ENCODE measurements at regions of chr16 and their contacts with region 1.

Region 1: DNA sequence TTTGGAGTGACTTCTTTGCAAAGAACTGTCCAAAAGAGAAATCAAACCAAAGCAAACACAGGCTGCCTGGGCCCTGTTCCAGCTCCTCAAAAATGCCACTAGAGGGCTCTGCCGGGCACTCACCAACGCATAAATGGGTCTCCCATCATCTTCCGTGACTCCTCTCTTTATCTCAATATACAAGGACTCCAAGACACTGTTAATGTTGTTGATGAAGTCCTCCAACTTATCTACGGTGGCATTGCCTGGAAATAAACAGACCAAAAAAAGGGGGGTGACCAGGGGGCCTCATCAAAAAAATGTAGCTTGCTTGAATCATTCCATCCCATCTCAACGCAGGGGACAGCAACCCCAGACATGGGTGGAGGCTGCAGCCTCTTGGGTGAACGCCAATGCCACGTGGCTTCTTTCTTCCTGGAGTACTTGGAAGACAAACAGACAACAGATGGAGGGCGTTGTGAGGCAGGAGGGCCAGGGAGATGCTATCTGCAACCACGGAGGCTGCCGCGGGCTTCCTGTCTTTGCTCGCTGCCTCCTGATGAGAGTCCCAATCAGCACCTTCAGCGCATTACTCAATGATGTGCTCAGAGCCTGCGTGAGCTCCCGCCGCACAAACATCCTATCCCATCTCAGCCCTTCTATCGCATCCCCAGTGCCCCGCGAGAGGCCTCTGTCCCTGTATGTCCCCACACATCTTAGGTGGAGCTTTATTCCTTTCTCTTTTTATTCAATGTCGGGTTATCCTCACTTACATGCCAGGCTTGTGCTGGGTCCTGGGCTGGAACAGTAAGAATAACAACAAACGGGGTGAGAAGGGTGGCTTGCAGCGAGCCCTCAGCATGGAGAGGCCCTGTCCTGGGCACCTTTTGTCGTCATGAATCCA is 32.0 kb downstream of the KDM8 start:
- DNase-seq: peak; percentile 38
- ATAC-seq: peak; percentile 49
- H3K4me3 ChIP-seq: no peak overlapping the region
- H3K27ac ChIP-seq: no peak overlapping the region
- H3K4me1 ChIP-seq: peaks cover 56% of the 10 kb centered on the region
- H3K27me3 ChIP-seq: no peaks in the 10 kb centered on the region
- CTCF ChIP-seq: peak; percentile 88 to 95 (median 89); a peak in 5 of 6 replicates
- EP300 ChIP-seq: no peak
- POLR2A ChIP-seq: no peak
- RAD21 ChIP-seq: peak; percentile 90

Region 2: DNA sequence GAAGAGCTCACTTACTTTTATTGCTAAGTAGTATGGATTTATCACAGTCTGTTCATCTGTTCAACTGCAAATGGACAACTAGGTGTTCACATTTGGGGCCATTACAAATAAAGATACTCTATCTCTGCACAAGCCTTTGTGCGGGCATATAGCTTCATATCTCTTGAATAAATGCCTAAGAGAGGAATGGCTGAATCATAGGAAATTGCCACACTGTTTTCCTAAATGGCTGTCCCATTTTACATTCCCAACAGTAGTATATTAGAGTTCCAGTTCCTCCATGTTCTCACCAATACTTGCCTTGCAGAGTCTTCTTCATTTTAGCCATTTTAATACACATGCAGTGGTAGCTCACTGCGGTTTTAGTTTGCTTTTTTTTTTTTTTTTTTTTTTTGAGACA is 12.7 kb after region 1 on chr16:
- CTCF ChIA-PET with region 1: interaction called, 38 read pairs
- POLR2A ChIA-PET with region 1: interaction called, 79 read pairs
- RAD21 ChIA-PET with region 1: interaction called, 22 read pairs
- SMC1A ChIA-PET with region 1: interaction called, 165 read pairs
- in situ Hi-C with region 1: no loop called
- intact Hi-C with region 1: no loop called
- DNase-seq: no peak
- ATAC-seq: no peak
- H3K4me3 ChIP-seq: no peak overlapping the region
- H3K27ac ChIP-seq: no peak overlapping the region
- H3K4me1 ChIP-seq: peaks cover 11% of the 10 kb centered on the region
- H3K27me3 ChIP-seq: no peaks in the 10 kb centered on the region
- CTCF ChIP-seq: no peak
- EP300 ChIP-seq: no peak
- POLR2A ChIP-seq: no peak
- RAD21 ChIP-seq: no peak

Region 3: GRCh38 chr16:27273670-27274423 is 38.6 kb after region 1 on chr16:
- CTCF ChIA-PET with region 1: interaction called, 121 read pairs
- POLR2A ChIA-PET with region 1: interaction called, 34 read pairs
- RAD21 ChIA-PET with region 1: interaction called, 105 read pairs
- SMC1A ChIA-PET with region 1: interaction called, 178 read pairs
- in situ Hi-C with region 1: no loop called
- intact Hi-C with region 1: no loop called
- DNase-seq: no peak
- ATAC-seq: peak; percentile 82
- H3K4me3 ChIP-seq: no peak overlapping the region
- H3K27ac ChIP-seq: no peak overlapping the region
- H3K4me1 ChIP-seq: peaks cover 16% of the 10 kb centered on the region
- H3K27me3 ChIP-seq: no peaks in the 10 kb centered on the region
- CTCF ChIP-seq: no peak
- EP300 ChIP-seq: 0 out of 4 replicates have a peak, but pooled peaks of 1 of the 2 experiments have one; percentile 17
- POLR2A ChIP-seq: no peak
- RAD21 ChIP-seq: no peak

Region 4: GRCh38 chr16:27321011-27321915 is 86.0 kb after region 1 on chr16:
- CTCF ChIA-PET with region 1: interaction called, 119 read pairs
- POLR2A ChIA-PET with region 1: interaction called, 6 read pairs
- RAD21 ChIA-PET with region 1: interaction called, 93 read pairs
- SMC1A ChIA-PET with region 1: interaction called, 88 read pairs
- in situ Hi-C with region 1: loop called (anchors 5 kb)
- intact Hi-C with region 1: no loop called
- DNase-seq: no peak
- ATAC-seq: no peak
- H3K4me3 ChIP-seq: no peak overlapping the region
- H3K27ac ChIP-seq: no peak overlapping the region
- H3K4me1 ChIP-seq: peaks cover 29% of the 10 kb centered on the region
- H3K27me3 ChIP-seq: no peaks in the 10 kb centered on the region
- CTCF ChIP-seq: no peak
- EP300 ChIP-seq: no peak
- POLR2A ChIP-seq: no peak
- RAD21 ChIP-seq: no peak

Region 5: GRCh38 chr16:27374804-27375425 is 139.6 kb after region 1 on chr16:
- CTCF ChIA-PET with region 1: interaction called, 259 read pairs
- POLR2A ChIA-PET with region 1: interaction called, 5 read pairs
- RAD21 ChIA-PET with region 1: interaction called, 168 read pairs
- SMC1A ChIA-PET with region 1: interaction called, 152 read pairs
- in situ Hi-C with region 1: loop called (anchors 5 kb)
- intact Hi-C with region 1: no loop called
- DNase-seq: peak; percentile 90
- ATAC-seq: peak; percentile 72
- H3K4me3 ChIP-seq: peak overlapping the region; percentile 56
- H3K27ac ChIP-seq: peak overlapping the region; percentile 72
- H3K4me1 ChIP-seq: peaks cover 61% of the 10 kb centered on the region
- H3K27me3 ChIP-seq: no peaks in the 10 kb centered on the region
- CTCF ChIP-seq: peak; percentile 39 to 50 (median 42); a peak in 4 of 6 replicates
- EP300 ChIP-seq: no peak
- POLR2A ChIP-seq: peak; percentile 77
- RAD21 ChIP-seq: peak; percentile 37; the same call in 1 of the 2 replicates

Region 6: GRCh38 chr16:27449434-27450195 is 214.3 kb after region 1 on chr16:
- CTCF ChIA-PET with region 1: interaction called, 24 read pairs
- POLR2A ChIA-PET with region 1: no interaction called
- RAD21 ChIA-PET with region 1: interaction called, 10 read pairs
- SMC1A ChIA-PET with region 1: interaction called, 26 read pairs
- in situ Hi-C with region 1: no loop called
- intact Hi-C with region 1: no loop called
- DNase-seq: no peak
- ATAC-seq: peak; percentile 79
- H3K4me3 ChIP-seq: no peak overlapping the region
- H3K27ac ChIP-seq: peak overlapping the region; percentile 66
- H3K4me1 ChIP-seq: peaks cover 57% of the 10 kb centered on the region
- H3K27me3 ChIP-seq: no peaks in the 10 kb centered on the region
- CTCF ChIP-seq: no peak
- EP300 ChIP-seq: peak; percentile 81; a peak in 3 of 4 replicates
- POLR2A ChIP-seq: peak; percentile 76
- RAD21 ChIP-seq: 0 out of 2 replicates have a peak, but pooled peaks have one; percentile 1

Region 7: GRCh38 chr16:28110479-28110878 is 875.2 kb after region 1 on chr16:
- CTCF ChIA-PET with region 1: no interaction called
- POLR2A ChIA-PET with region 1: no interaction called
- RAD21 ChIA-PET with region 1: no interaction called
- SMC1A ChIA-PET with region 1: no interaction called
- in situ Hi-C with region 1: no loop called
- intact Hi-C with region 1: no loop called
- DNase-seq: no peak
- ATAC-seq: no peak
- H3K4me3 ChIP-seq: no peak overlapping the region
- H3K27ac ChIP-seq: no peak overlapping the region
- H3K4me1 ChIP-seq: no peaks in the 10 kb centered on the region
- H3K27me3 ChIP-seq: no peaks in the 10 kb centered on the region
- CTCF ChIP-seq: no peak
- EP300 ChIP-seq: no peak
- POLR2A ChIP-seq: no peak
- RAD21 ChIP-seq: no peak

Measured in GM12878 (cell line).